GM12878 (cell line): ENCODE measurements at regions of chr4 and their contacts with region 1.

Region 1: GRCh38 chr4:185597532-185598188 is 62.4 kb upstream of the PDLIM3 start:
- DNase-seq: peak; percentile 33
- ATAC-seq: peak; percentile 84
- H3K4me3 ChIP-seq: no peak overlapping the region
- H3K27ac ChIP-seq: no peak overlapping the region
- H3K4me1 ChIP-seq: peaks cover 3% of the 10 kb centered on the region; the same call in 1 of the 2 replicates
- H3K27me3 ChIP-seq: no peaks in the 10 kb centered on the region
- CTCF ChIP-seq: peak; percentile 95 to 99 (median 99); a peak in 5 of 6 replicates
- EP300 ChIP-seq: no peak
- POLR2A ChIP-seq: no peak
- RAD21 ChIP-seq: peak; percentile 98

Region 2: GRCh38 chr4:185005216-185005819 is 592.3 kb before region 1 on chr4:
- CTCF ChIA-PET with region 1: no interaction called
- POLR2A ChIA-PET with region 1: no interaction called
- RAD21 ChIA-PET with region 1: interaction called, 3 read pairs
- SMC1A ChIA-PET with region 1: no interaction called
- in situ Hi-C with region 1: no loop called
- intact Hi-C with region 1: loop called (anchors 10 kb)
- DNase-seq: peak; percentile 8
- ATAC-seq: peak; percentile 99
- H3K4me3 ChIP-seq: no peak overlapping the region
- H3K27ac ChIP-seq: no peak overlapping the region
- H3K4me1 ChIP-seq: no peaks in the 10 kb centered on the region
- H3K27me3 ChIP-seq: peaks cover 3 to 5% of the 10 kb centered on the region in 2 experiments; a peak in 2 of 4 replicates
- CTCF ChIP-seq: peak; percentile 89 to 94 (median 94)
- EP300 ChIP-seq: no peak
- POLR2A ChIP-seq: no peak
- RAD21 ChIP-seq: peak; percentile 87

Region 3: DNA sequence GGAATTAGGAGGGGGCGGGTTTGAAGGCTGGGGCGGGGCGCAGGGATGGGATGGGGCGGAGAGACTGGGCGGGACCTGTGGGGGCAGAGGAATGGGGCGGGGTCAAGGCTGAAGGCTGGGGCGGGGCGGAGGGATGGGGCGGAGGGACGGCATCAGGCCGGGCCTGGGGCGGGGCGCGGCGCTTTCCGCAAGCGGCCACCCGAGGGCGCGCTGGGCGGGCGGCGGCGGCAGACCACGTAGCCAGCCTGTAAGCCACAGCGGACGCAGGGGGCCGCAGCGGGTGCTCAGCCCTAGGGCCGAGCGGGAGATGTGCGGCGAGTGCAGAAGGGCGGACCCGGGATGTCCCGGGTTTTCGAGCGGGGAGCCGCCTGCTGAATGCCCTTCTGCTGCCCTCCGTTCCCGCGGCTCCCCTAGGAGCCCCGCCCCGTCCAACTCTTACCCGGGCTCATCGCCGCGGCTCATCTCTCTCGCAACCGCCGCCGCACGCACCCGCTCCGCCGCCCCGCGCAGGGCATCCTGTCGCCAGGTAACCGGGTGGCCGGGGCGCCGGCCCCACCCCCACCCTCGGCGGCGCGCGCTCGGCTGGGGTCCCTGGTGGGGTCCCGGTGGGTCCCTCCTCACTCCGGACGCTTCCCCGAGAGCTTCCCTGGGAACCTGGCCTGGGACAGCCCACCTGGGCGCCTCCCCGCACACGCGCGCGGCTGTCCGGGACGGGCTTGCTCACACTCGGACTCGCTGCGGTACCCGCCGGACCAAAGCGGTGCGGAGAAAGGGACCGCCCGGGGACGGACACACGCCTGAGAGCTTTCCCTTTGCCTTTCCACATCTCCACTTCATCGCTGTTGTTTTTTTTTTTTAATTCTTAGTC is 126.2 kb before region 1 on chr4 and contains the start of gene CCDC110:
- CTCF ChIA-PET with region 1: interaction called, 27 read pairs
- POLR2A ChIA-PET with region 1: no interaction called
- RAD21 ChIA-PET with region 1: interaction called, 7 read pairs
- SMC1A ChIA-PET with region 1: interaction called, 11 read pairs
- in situ Hi-C with region 1: no loop called
- intact Hi-C with region 1: loop called (anchors 1 kb)
- DNase-seq: peak; percentile 47
- ATAC-seq: peak; percentile 94
- H3K4me3 ChIP-seq: peak within 1 kb of the TSS; percentile 78
- H3K27ac ChIP-seq: peak within 1 kb of the TSS; percentile 81
- H3K4me1 ChIP-seq: peaks cover 13% of the 10 kb centered on the region
- H3K27me3 ChIP-seq: peaks cover 0 to 2% of the 10 kb centered on the region in 2 experiments; a peak in 1 of 4 replicates
- CTCF ChIP-seq: peak; percentile 40 to 72 (median 56); a peak in 5 of 6 replicates
- EP300 ChIP-seq: no peak
- POLR2A ChIP-seq: peak; percentile 86
- RAD21 ChIP-seq: peak; percentile 65
- polyA plus RNA-seq, gene CCDC110: 1.2 to 2.1 TPM

Region 4: GRCh38 chr4:185587427-185588161 is 10.1 kb before region 1 on chr4:
- CTCF ChIA-PET with region 1: interaction called, 21 read pairs
- POLR2A ChIA-PET with region 1: no interaction called
- RAD21 ChIA-PET with region 1: no interaction called
- SMC1A ChIA-PET with region 1: interaction called, 7 read pairs
- in situ Hi-C with region 1: no loop called
- intact Hi-C with region 1: no loop called
- DNase-seq: peak; percentile 26
- ATAC-seq: peak; percentile 98
- H3K4me3 ChIP-seq: no peak overlapping the region; the same call in 1 of the 2 replicates
- H3K27ac ChIP-seq: peak overlapping the region; percentile 70
- H3K4me1 ChIP-seq: peaks cover 9% of the 10 kb centered on the region
- H3K27me3 ChIP-seq: no peaks in the 10 kb centered on the region
- CTCF ChIP-seq: no peak
- EP300 ChIP-seq: peak; percentile 59 to 73; a peak in 2 of 4 replicates
- POLR2A ChIP-seq: 0 out of 2 replicates have a peak, but pooled peaks have one; percentile 52
- RAD21 ChIP-seq: no peak

Region 5: GRCh38 chr4:185625503-185625902 is 27.8 kb after region 1 on chr4:
- CTCF ChIA-PET with region 1: interaction called, 10 read pairs
- POLR2A ChIA-PET with region 1: no interaction called
- RAD21 ChIA-PET with region 1: no interaction called
- SMC1A ChIA-PET with region 1: interaction called, 5 read pairs
- in situ Hi-C with region 1: no loop called
- intact Hi-C with region 1: no loop called
- DNase-seq: no peak
- ATAC-seq: no peak
- H3K4me3 ChIP-seq: no peak overlapping the region
- H3K27ac ChIP-seq: no peak overlapping the region
- H3K4me1 ChIP-seq: no peaks in the 10 kb centered on the region
- H3K27me3 ChIP-seq: no peaks in the 10 kb centered on the region
- CTCF ChIP-seq: no peak
- EP300 ChIP-seq: no peak
- POLR2A ChIP-seq: no peak
- RAD21 ChIP-seq: no peak